ENCODE measurements at regions of chr4 and their contacts with region 1.

Region 1: DNA sequence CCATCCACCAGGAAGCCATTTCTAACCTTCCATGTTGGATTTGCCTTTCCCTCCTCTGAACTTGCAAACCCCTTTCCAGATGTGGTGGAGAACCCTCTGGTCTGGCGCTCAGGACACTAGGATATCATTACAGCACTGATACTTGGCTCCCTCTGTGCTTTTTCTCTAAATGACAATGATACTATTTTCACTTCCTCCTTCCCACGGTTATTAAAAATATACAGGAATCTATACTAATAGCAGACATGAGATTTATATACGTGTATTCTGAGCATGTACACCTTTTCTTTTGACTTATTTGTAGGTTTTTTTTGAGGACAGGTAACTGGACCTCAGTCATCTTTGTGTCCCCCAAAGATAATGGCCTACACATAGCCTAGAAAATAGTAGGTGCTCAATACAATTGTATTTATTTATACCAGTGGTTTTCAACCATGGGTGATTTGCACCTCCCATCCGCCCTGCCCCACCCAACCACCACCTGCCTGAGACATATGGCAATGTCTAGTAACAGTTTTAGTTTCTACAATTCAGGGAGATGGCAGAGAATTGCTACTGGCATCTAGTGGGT is 60.4 kb upstream of the PLAC8 start:
- DNase-seq: peak; percentile 87
- ATAC-seq: peak; percentile 76
- H3K4me3 ChIP-seq: 0 out of 2 replicates have a peak overlapping the region, but pooled peaks have one; percentile 30
- H3K27ac ChIP-seq: peak overlapping the region; percentile 90
- H3K4me1 ChIP-seq: peaks cover 62% of the 10 kb centered on the region
- H3K27me3 ChIP-seq: no peaks in the 10 kb centered on the region
- CTCF ChIP-seq: no peak
- EP300 ChIP-seq: peak; percentile 1 to 47; a peak in 1 of 4 replicates
- POLR2A ChIP-seq: no peak
- RAD21 ChIP-seq: no peak

Region 2: GRCh38 chr4:82823062-82823461 is 351.9 kb before region 1 on chr4:
- CTCF ChIA-PET with region 1: no interaction called
- POLR2A ChIA-PET with region 1: interaction called, 11 read pairs
- RAD21 ChIA-PET with region 1: no interaction called
- SMC1A ChIA-PET with region 1: no interaction called
- in situ Hi-C with region 1: no loop called
- intact Hi-C with region 1: no loop called
- DNase-seq: no peak
- ATAC-seq: no peak
- H3K4me3 ChIP-seq: no peak overlapping the region
- H3K27ac ChIP-seq: no peak overlapping the region
- H3K4me1 ChIP-seq: no peaks in the 10 kb centered on the region
- H3K27me3 ChIP-seq: no peaks in the 10 kb centered on the region
- CTCF ChIP-seq: no peak
- EP300 ChIP-seq: no peak
- POLR2A ChIP-seq: no peak
- RAD21 ChIP-seq: no peak

Region 3: GRCh38 chr4:82898322-82899243 is 276.3 kb before region 1 on chr4:
- CTCF ChIA-PET with region 1: no interaction called
- POLR2A ChIA-PET with region 1: no interaction called
- RAD21 ChIA-PET with region 1: no interaction called
- SMC1A ChIA-PET with region 1: no interaction called
- in situ Hi-C with region 1: no loop called
- intact Hi-C with region 1: no loop called
- DNase-seq: no peak
- ATAC-seq: no peak
- H3K4me3 ChIP-seq: peak overlapping the region; percentile 86
- H3K27ac ChIP-seq: peak overlapping the region; percentile 87; the same call in 1 of the 2 replicates
- H3K4me1 ChIP-seq: no peaks in the 10 kb centered on the region; the same call in 1 of the 2 replicates
- H3K27me3 ChIP-seq: no peaks in the 10 kb centered on the region
- CTCF ChIP-seq: peak; percentile 38 to 53 (median 44)
- EP300 ChIP-seq: no peak
- POLR2A ChIP-seq: no peak
- RAD21 ChIP-seq: 0 out of 2 replicates have a peak, but pooled peaks have one; percentile 34

Region 4: DNA sequence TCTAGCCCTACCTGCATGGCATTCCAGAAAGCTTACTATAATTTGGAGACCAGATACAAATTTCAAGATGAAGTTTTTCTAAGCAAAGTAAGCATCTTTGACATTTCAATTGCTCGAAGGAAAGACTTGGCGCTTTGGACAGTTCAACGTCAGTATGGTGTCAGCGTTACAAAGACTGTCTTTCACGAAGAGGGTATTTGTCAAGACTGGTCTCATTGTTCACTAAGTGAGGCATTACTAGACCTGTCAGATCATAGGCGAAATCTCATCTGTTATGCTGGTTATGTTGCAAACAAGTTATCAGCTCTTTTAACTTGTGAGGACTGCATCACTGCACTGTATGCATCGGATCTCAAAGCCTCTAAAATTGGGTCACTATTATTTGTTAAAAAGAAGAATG is 256.8 kb before region 1 on chr4:
- CTCF ChIA-PET with region 1: no interaction called
- POLR2A ChIA-PET with region 1: no interaction called
- RAD21 ChIA-PET with region 1: no interaction called
- SMC1A ChIA-PET with region 1: no interaction called
- in situ Hi-C with region 1: no loop called
- intact Hi-C with region 1: no loop called
- DNase-seq: no peak
- ATAC-seq: no peak
- H3K4me3 ChIP-seq: no peak overlapping the region
- H3K27ac ChIP-seq: no peak overlapping the region
- H3K4me1 ChIP-seq: no peaks in the 10 kb centered on the region
- H3K27me3 ChIP-seq: no peaks in the 10 kb centered on the region
- CTCF ChIP-seq: no peak
- EP300 ChIP-seq: no peak
- POLR2A ChIP-seq: no peak
- RAD21 ChIP-seq: no peak

Region 5: DNA sequence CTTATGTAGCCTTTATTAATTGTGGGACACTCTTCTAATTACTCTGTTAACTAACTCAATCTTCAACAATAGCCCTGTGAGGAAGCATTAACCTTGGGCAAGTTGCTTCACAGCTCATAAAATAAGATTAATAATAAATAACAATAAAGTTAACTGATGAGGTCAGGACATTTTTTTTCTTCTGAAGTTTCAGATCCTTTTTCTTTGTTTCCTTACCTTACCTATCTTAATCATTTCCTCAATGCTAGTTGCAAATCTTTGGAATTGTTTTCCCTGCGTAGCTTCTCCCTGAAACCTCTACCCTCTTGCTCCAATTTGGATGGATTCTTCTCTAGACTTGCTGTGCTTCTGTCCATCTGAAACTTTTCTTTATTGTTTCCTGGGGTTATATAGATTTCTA is 42.9 kb before region 1 on chr4:
- CTCF ChIA-PET with region 1: interaction called, 3 read pairs
- POLR2A ChIA-PET with region 1: no interaction called
- RAD21 ChIA-PET with region 1: interaction called, 4 read pairs
- SMC1A ChIA-PET with region 1: interaction called, 11 read pairs
- in situ Hi-C with region 1: no loop called
- intact Hi-C with region 1: no loop called
- DNase-seq: no peak
- ATAC-seq: peak; percentile 52
- H3K4me3 ChIP-seq: no peak overlapping the region
- H3K27ac ChIP-seq: no peak overlapping the region
- H3K4me1 ChIP-seq: peaks cover under 1% of the 10 kb centered on the region
- H3K27me3 ChIP-seq: no peaks in the 10 kb centered on the region
- CTCF ChIP-seq: no peak
- EP300 ChIP-seq: no peak
- POLR2A ChIP-seq: no peak
- RAD21 ChIP-seq: no peak

Region 6: GRCh38 chr4:83197555-83198235 is 22.8 kb after region 1 on chr4:
- CTCF ChIA-PET with region 1: interaction called, 5 read pairs
- POLR2A ChIA-PET with region 1: interaction called, 5 read pairs
- RAD21 ChIA-PET with region 1: interaction called, 4 read pairs
- SMC1A ChIA-PET with region 1: interaction called, 12 read pairs
- in situ Hi-C with region 1: no loop called
- intact Hi-C with region 1: no loop called
- DNase-seq: no peak
- ATAC-seq: peak; percentile 82
- H3K4me3 ChIP-seq: no peak overlapping the region
- H3K27ac ChIP-seq: peak overlapping the region; percentile 32; the same call in 1 of the 2 replicates
- H3K4me1 ChIP-seq: peaks cover 10% of the 10 kb centered on the region
- H3K27me3 ChIP-seq: no peaks in the 10 kb centered on the region
- CTCF ChIP-seq: no peak
- EP300 ChIP-seq: no peak
- POLR2A ChIP-seq: no peak
- RAD21 ChIP-seq: no peak

Region 7: DNA sequence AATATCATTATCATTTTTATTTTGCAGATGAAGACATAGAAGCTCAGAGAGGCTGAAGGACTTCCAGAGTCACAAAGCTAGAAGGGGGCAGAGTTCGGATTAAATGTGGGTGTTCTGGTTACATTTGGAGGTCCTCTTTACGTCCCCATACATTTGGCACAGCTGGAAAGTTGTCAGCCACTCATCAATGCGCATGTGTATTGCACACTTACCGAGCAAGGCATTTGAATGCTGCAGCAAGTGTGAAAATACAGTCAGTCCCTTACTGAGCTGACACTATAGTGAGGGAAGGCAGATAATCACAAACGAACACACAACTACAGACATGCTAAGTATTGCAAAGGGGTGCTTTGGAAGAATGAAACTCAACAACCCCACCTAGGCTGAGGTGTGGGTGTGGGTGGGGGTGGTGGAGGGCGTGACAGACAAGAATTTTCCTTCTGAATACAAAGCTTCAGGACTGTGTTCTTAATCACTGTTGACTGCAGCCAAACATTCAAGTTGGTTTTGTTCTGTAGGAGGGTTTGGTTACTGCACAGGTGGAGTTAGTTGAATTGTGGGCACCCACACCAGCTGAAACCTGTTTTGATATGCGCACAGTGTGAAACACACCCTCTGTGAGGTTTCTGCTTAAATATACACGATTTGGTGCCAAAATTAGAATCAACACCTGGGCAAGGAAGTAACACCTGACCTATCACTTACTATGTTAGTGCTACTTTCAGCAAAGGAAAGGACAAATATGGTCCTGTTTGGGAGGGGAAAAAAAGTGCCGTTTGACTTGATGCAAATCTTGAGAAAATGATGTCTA is 37.3 kb after region 1 on chr4:
- CTCF ChIA-PET with region 1: interaction called, 7 read pairs
- POLR2A ChIA-PET with region 1: interaction called, 19 read pairs
- RAD21 ChIA-PET with region 1: interaction called, 27 read pairs
- SMC1A ChIA-PET with region 1: interaction called, 51 read pairs
- in situ Hi-C with region 1: no loop called
- intact Hi-C with region 1: loop called (anchors 1 kb)
- DNase-seq: peak; percentile 90
- ATAC-seq: peak; percentile 87
- H3K4me3 ChIP-seq: no peak overlapping the region
- H3K27ac ChIP-seq: peak overlapping the region; percentile 60
- H3K4me1 ChIP-seq: peaks cover 29% of the 10 kb centered on the region
- H3K27me3 ChIP-seq: no peaks in the 10 kb centered on the region
- CTCF ChIP-seq: no peak
- EP300 ChIP-seq: peak; percentile 70 to 88; a peak in 3 of 4 replicates
- POLR2A ChIP-seq: no peak
- RAD21 ChIP-seq: no peak

Region 8: GRCh38 chr4:83252782-83253405 is 78.0 kb after region 1 on chr4:
- CTCF ChIA-PET with region 1: interaction called, 10 read pairs
- POLR2A ChIA-PET with region 1: no interaction called
- RAD21 ChIA-PET with region 1: interaction called, 5 read pairs
- SMC1A ChIA-PET with region 1: interaction called, 18 read pairs
- in situ Hi-C with region 1: no loop called
- intact Hi-C with region 1: loop called (anchors 5 kb)
- DNase-seq: no peak
- ATAC-seq: peak; percentile 83
- H3K4me3 ChIP-seq: no peak overlapping the region
- H3K27ac ChIP-seq: no peak overlapping the region
- H3K4me1 ChIP-seq: peaks cover 13% of the 10 kb centered on the region; the same call in 1 of the 2 replicates
- H3K27me3 ChIP-seq: no peaks in the 10 kb centered on the region
- CTCF ChIP-seq: peak; percentile 82 to 86 (median 84)
- EP300 ChIP-seq: no peak
- POLR2A ChIP-seq: no peak
- RAD21 ChIP-seq: peak; percentile 93

Region 9: DNA sequence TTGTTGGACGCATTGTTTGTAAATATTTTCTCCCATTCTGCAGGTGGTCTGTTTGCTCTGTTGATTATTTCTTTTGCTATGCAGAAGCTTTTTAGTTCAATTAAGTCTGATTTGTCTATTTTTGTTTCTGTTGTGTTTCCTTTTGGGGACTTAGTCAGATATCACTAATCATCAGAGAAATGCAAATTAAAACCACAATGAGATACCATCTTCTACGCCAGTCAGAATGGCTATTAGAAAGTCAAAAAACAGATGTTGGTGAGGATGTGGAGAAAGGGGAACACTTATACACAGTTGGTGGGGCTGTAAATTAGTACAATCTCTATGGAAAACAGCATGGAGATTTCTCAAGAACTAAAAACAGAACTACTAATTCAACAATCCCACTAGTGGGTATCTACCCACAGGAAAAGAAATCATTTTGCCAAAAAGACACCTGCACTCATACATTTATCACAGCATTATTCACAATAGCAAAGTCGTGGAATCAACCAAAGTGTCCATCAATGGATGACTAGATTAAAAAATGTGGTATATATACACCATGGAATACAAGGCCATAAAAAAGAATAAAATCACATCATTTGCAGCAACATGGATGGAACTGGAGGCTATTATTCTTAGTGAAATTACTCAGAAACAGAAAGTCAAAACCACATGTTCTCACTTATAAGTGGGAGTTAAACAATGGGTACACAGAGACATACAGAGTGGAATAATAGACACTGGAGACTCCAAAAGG is 101.5 kb after region 1 on chr4:
- CTCF ChIA-PET with region 1: interaction called, 6 read pairs
- POLR2A ChIA-PET with region 1: interaction called, 3 read pairs
- RAD21 ChIA-PET with region 1: interaction called, 6 read pairs
- SMC1A ChIA-PET with region 1: interaction called, 9 read pairs
- in situ Hi-C with region 1: no loop called
- intact Hi-C with region 1: loop called (anchors 2 kb)
- DNase-seq: no peak
- ATAC-seq: peak; percentile 70
- H3K4me3 ChIP-seq: peak overlapping the region; percentile 26; the same call in 1 of the 2 replicates
- H3K27ac ChIP-seq: peak overlapping the region; percentile 78
- H3K4me1 ChIP-seq: peaks cover 44% of the 10 kb centered on the region
- H3K27me3 ChIP-seq: no peaks in the 10 kb centered on the region
- CTCF ChIP-seq: no peak
- EP300 ChIP-seq: peak in 1 of 2 experiments; percentile 70; a peak in 1 of 4 replicates
- POLR2A ChIP-seq: no peak
- RAD21 ChIP-seq: no peak

Measured in GM12878 (cell line).